Activated CD4-positive, alpha-beta T cell treated with anti-CD3 and anti-CD28 coated beads, Interleukin-2, amount 10 ng/mL, durations not matched to agents 24 days and 14 days (primary cell): ENCODE measurements at regions of chr1 and their contacts with region 1.

Region 1: GRCh38 chr1:205528887-205529825 is 24.7 kb downstream of the CDK18 start:
- DNase-seq: peak; percentile 95
- H3K4me3 Mint-ChIP-seq: peak overlapping the region; percentile 48
- H3K27ac Mint-ChIP-seq: peak overlapping the region; percentile 34
- H3K4me1 Mint-ChIP-seq: peaks cover 3% of the 10 kb centered on the region
- H3K27me3 Mint-ChIP-seq: peaks cover 6% of the 10 kb centered on the region

Region 2: DNA sequence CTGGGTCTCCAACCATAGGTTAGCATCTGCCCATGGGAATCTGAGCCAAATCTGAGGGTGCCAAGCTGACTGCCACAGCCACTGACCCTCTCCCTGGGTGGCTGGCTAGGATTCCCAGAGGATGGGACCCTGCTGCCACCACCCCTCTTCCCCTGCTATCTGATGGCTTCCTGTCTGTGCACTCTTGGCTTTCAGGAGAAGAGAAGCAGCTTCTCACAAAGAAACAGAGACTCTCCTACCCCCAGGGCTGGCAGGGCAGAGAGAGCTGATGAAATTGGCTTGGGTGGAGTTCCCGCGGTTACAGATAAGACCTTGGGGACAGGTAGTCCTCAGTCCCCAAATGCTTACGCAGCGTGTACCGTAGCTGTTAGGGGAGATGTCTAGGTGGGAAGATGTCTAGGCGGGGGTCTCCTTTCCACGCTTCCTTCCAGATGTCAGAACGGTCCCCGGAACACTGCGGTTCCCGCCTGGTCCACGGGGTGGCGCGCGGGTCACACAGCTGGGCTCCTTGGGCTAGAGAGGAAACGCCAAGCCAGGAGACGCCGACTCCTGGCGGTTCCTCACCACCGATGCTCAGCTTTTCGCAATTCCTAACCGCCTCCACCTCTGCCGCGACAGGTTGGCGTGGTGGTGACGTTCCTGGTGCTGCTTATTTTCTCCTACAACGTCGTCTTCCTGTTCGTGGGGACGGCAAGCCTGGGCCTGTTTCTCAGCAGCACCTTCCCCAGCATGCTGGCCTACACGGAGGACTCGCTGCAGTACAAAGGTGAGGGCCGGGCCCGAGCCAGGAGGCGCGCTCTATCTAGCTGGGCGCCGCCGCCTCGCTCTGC is 62.6 kb after region 1 on chr1:
- intact Hi-C with region 1: loop called (anchors 5 kb)
- DNase-seq: peak; percentile 97
- H3K4me3 Mint-ChIP-seq: peak overlapping the region; percentile 91
- H3K27ac Mint-ChIP-seq: peak overlapping the region; percentile 92
- H3K4me1 Mint-ChIP-seq: peaks cover 44% of the 10 kb centered on the region
- H3K27me3 Mint-ChIP-seq: no peaks in the 10 kb centered on the region

Region 3: DNA sequence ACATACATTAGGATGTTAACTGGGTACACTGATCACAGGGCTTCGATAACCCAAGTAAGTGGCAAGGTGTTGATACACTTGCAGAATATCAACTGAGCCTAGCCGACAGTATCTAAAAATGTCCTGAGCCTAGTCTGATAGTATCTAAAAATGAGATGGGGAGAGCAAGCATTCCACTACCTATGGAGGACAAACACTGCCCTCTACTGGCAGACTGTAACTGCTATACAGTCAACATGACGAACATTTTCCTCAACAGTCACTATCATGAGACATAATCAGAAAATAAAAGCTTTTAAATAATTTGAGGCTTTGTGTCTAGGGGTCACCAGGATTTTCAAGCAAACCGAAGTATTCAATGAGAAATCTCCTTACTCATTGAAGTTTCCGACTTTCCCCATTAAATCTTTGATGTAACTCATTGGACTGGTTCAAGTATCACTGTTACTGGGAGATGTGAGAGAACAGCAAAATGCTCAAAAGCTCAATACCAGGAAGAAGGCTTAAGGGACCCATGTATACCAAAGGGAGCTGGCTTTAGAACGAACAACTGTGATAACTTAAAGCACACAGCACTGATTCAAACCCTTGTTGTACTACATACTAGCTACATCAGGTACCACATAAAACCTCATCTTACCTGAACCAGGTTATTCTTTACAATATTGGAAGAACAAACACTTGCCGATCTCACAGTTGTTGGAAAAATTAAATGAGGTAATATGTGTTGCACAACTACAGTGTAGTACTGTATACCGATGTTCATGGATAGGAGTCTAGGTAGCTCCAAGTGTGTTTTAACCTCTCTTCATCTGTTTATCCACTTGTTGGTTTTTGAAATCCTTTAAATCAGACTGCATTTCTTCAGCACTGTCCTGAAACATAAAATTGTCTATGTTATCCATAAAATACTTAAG is 182.2 kb after region 1 on chr1:
- intact Hi-C with region 1: loop called (anchors 2 kb)
- DNase-seq: peak; percentile 90
- H3K4me3 Mint-ChIP-seq: no peak overlapping the region
- H3K27ac Mint-ChIP-seq: peak overlapping the region; percentile 44
- H3K4me1 Mint-ChIP-seq: peaks cover 19% of the 10 kb centered on the region
- H3K27me3 Mint-ChIP-seq: no peaks in the 10 kb centered on the region